Ascending aorta (tissue), 2 donors: ENCODE measurements at regions of chr22 and their contacts with region 1.

Region 1: GRCh38 chr22:39270280-39270679 is 25.5 kb upstream of the PDGFB start:
- DNase-seq: no peak
- H3K4me3 ChIP-seq: no peak overlapping the region
- H3K27ac ChIP-seq: no peak overlapping the region
- H3K4me1 ChIP-seq: no peaks in the 10 kb centered on the region
- H3K27me3 ChIP-seq: no peaks in the 10 kb centered on the region
- CTCF ChIP-seq: no peak

Region 2: DNA sequence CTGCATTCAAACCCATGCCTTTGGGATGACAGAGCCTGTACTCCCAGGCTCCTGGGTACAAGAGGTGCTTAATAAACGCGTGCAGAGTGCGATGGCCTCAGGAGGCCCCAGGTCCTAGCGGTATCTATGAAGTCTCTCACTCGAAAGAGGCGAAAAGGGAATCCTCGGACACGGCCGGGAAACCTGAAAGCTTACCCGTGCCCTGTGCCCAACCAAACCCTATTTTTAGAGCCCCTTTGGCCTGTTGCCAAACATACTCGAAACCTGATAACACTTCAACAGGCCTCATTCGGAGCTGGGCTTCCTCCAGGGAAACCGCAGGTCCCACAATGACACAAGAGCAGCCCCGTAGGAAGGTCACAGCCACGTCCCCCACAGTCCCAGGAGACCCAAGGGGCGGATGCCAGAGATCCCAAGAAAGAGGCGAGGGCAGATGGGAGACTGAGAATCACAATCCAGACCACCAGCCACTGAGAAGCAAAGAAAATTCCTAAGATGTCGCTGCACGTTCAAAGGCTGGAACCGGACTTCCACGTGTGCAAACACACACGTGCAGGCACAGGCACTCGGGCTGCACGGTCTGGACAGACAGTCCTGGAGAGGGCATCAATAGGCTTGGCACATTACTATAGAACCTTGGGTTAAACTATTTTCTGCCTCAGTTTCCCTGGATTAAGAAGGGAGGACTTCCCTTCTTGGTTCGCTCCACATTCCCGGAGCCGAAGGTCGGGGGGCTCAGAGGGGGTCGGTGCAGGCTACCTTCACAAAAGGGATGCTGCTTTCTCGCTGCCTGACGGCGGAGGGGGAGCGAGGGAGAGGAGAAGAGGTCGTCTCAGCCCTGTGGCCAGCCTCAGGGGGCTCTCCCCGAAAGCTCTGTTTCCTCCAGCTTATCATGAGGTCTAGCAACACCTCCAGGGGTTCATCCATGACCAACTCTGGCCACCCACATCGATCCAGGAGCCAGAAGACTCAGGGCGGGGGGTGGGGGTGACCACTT is 33.7 kb before region 1 on chr22:
- intact Hi-C with region 1: loop called (anchors 5 kb)
- DNase-seq: no peak
- H3K4me3 ChIP-seq: no peak overlapping the region
- H3K27ac ChIP-seq: no peak overlapping the region
- H3K4me1 ChIP-seq: peaks cover 4 to 11% of the 10 kb centered on the region in 2 donors
- H3K27me3 ChIP-seq: no peaks in the 10 kb centered on the region
- CTCF ChIP-seq: no peak

Region 3: GRCh38 chr22:40939202-40939601 is 1668.9 kb after region 1 on chr22:
- intact Hi-C with region 1: no loop called
- DNase-seq: no peak
- H3K4me3 ChIP-seq: no peak overlapping the region
- H3K27ac ChIP-seq: no peak overlapping the region
- H3K4me1 ChIP-seq: no peaks in the 10 kb centered on the region
- H3K27me3 ChIP-seq: no peaks in the 10 kb centered on the region
- CTCF ChIP-seq: no peak